ENCODE measurements at regions of chr3 and their contacts with region 1.

Region 1: GRCh38 chr3:59940718-59941117 is 890.9 kb upstream of the CFAP20DC start:
- DNase-seq: no peak
- ATAC-seq: peak; percentile 29
- H3K4me3 ChIP-seq: no peak overlapping the region
- H3K4me3 Mint-ChIP-seq: peak overlapping the region in 8 of 10 donors; percentile 38 to 71 (median 60)
- H3K27ac ChIP-seq: peak overlapping the region; percentile 8
- H3K27ac Mint-ChIP-seq: peak overlapping the region; percentile 26 to 89 (median 74)
- H3K4me1 ChIP-seq: peaks cover 18 to 41% of the 10 kb centered on the region in 2 donors
- H3K4me1 Mint-ChIP-seq: peaks cover 25 to 96% (median 87%) of the 10 kb centered on the region in 7 donors
- H3K27me3 ChIP-seq: no peaks in the 10 kb centered on the region
- H3K27me3 Mint-ChIP-seq: no peaks in the 10 kb centered on the region

Region 2: GRCh38 chr3:59925946-59926345 is 14.8 kb before region 1 on chr3:
- CTCF ChIA-PET with region 1: no interaction called
- POLR2A ChIA-PET with region 1: interaction called, 6 read pairs
- intact Hi-C with region 1: loop called (anchors 2 kb)
- DNase-seq: no peak
- ATAC-seq: no peak
- H3K4me3 ChIP-seq: no peak overlapping the region
- H3K4me3 Mint-ChIP-seq: peak overlapping the region in 2 of 10 donors; percentile 14 to 37
- H3K27ac ChIP-seq: no peak overlapping the region
- H3K27ac Mint-ChIP-seq: peak overlapping the region in 7 of 9 donors; percentile 25 to 81 (median 62)
- H3K4me1 ChIP-seq: peaks cover 0 to 20% of the 10 kb centered on the region in 2 donors
- H3K4me1 Mint-ChIP-seq: peaks cover 23 to 95% (median 90%) of the 10 kb centered on the region in 7 donors
- H3K27me3 ChIP-seq: no peaks in the 10 kb centered on the region
- H3K27me3 Mint-ChIP-seq: no peaks in the 10 kb centered on the region

Region 3: GRCh38 chr3:60660026-60660425 is 719.3 kb after region 1 on chr3:
- CTCF ChIA-PET with region 1: no interaction called
- POLR2A ChIA-PET with region 1: no interaction called
- intact Hi-C with region 1: no loop called
- DNase-seq: no peak
- ATAC-seq: no peak
- H3K4me3 ChIP-seq: no peak overlapping the region
- H3K4me3 Mint-ChIP-seq: no peak overlapping the region
- H3K27ac ChIP-seq: no peak overlapping the region
- H3K27ac Mint-ChIP-seq: no peak overlapping the region
- H3K4me1 ChIP-seq: no peaks in the 10 kb centered on the region
- H3K4me1 Mint-ChIP-seq: peaks cover 0 to 4% (median 0%) of the 10 kb centered on the region in 7 donors
- H3K27me3 ChIP-seq: no peaks in the 10 kb centered on the region
- H3K27me3 Mint-ChIP-seq: no peaks in the 10 kb centered on the region